OCI-LY7 (cell line): ENCODE measurements at regions of chr17 and their contacts with region 1.

Region 1: DNA sequence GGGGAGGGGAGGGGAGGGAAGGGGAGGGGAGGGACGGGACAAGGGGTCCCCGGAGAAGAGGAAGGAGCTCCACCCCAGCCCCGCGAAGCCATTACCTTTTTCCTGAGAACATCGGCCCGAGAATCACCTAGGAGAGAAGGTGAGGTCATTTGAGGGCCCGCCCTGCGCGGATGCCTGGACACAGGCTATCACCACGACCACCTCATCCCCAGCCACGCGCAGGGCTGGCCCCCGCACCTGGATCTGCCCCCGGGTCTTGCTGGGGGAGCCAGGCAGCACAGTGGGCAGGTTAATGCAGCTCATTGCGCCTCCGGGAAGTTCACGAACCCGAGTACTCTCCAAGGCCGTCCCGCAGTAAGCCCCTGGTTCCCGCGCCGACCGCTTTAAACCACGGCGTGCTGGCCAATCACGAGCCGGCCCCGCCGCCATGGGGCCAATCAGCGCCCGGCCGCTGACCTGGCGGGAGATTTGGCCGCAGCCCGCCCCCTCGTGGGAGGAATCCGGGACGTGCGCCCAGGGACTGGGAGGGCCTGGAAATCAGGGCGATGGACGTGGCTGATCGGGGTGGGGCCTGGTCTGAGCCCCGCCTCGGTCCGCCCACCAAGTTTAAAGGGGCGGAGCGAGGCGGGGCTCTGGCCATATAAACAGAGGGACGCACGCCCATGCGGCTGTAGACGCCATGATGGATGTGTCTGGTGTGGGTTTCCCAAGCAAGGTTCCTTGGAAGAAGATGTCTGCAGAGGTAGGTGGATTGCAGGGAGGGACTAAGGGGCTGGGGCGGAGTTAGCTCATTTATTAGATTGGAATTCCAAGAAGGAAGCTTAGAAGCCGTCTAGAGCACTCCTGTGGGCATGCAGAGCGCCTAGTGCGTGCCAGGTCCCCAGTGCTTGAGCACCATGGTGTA is at the starts of genes AFMID and TK1:
- DNase-seq: peak; percentile 98
- H3K4me3 ChIP-seq: peak within 1 kb of the TSS; percentile 76
- H3K27ac ChIP-seq: peak within 1 kb of the TSS; percentile 41
- H3K4me1 ChIP-seq: peaks cover 60% of the 10 kb centered on the region
- CTCF ChIP-seq: peak; percentile 67
- total RNA-seq, gene AFMID: 87.8 and 89.1 TPM in 2 replicates
- total RNA-seq, gene TK1: 108 and 118 TPM in 2 replicates

Region 2: DNA sequence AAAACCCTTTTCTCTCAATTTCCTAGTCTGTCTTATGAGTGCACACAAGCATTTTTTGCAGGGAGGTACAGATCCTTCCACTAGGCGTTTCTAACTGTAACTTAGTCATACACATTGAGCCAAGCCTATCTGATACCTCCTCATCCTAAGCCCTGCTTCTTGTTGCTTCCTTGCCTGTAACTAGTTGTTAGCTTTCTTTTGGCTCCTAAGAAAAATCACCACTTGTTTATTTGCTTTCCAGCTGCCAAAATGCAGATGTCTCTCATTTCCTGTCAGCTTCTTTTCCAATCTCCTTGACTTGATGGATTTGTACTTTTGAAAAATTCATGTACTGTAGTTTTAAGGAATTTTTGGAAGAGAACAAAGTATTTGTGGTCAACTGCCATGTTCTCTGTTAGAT is 154.8 kb before region 1 on chr17:
- CTCF ChIA-PET with region 1: no interaction called
- POLR2A ChIA-PET with region 1: no interaction called
- intact Hi-C with region 1: no loop called
- DNase-seq: no peak
- H3K4me3 ChIP-seq: no peak overlapping the region
- H3K27ac ChIP-seq: no peak overlapping the region
- H3K4me1 ChIP-seq: peaks cover 9% of the 10 kb centered on the region
- CTCF ChIP-seq: no peak

Region 3: GRCh38 chr17:78128551-78129350 is 58.2 kb before region 1 on chr17 and contains the start of gene TMC6:
- CTCF ChIA-PET with region 1: interaction called, 5 read pairs
- POLR2A ChIA-PET with region 1: interaction called, 6 read pairs
- intact Hi-C with region 1: loop called (anchors 2 kb)
- DNase-seq: peak; percentile 86
- H3K4me3 ChIP-seq: peak within 1 kb of the TSS; percentile 81
- H3K27ac ChIP-seq: peak within 1 kb of the TSS; percentile 91
- H3K4me1 ChIP-seq: peaks cover 85% of the 10 kb centered on the region
- CTCF ChIP-seq: no peak
- total RNA-seq, gene TMC6: 94.0 and 124 TPM in 2 replicates

Region 4: DNA sequence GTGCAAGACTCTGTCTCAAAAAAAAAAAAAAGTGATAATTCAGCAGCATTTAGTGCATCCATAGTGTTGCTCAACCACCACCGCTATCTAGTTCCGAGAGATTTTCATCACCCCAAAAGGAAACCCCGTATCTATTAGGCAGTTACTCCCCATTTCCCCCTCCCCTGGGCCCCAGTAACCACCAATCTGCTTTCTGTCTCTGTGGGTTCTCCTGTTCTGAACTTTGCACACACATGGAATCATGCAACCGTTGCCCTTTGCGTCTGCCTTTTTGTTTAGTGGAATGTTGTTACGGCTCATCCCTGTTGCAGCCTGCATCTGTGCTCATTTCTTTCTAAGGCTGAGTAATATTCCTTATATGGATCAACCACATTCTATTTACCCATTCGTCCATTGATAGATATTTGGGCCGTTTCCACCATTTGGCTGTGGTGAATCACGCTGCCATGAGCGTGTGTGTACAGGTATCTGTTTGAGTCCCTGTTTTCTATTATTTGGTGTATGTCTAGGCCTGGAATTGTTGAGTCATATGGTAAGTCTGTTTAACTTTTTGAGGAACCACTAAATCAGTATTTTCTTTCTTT is 27.3 kb before region 1 on chr17:
- CTCF ChIA-PET with region 1: no interaction called
- POLR2A ChIA-PET with region 1: no interaction called
- intact Hi-C with region 1: no loop called
- DNase-seq: no peak
- H3K4me3 ChIP-seq: no peak overlapping the region
- H3K27ac ChIP-seq: no peak overlapping the region
- H3K4me1 ChIP-seq: peaks cover 20% of the 10 kb centered on the region
- CTCF ChIP-seq: no peak

Region 5: DNA sequence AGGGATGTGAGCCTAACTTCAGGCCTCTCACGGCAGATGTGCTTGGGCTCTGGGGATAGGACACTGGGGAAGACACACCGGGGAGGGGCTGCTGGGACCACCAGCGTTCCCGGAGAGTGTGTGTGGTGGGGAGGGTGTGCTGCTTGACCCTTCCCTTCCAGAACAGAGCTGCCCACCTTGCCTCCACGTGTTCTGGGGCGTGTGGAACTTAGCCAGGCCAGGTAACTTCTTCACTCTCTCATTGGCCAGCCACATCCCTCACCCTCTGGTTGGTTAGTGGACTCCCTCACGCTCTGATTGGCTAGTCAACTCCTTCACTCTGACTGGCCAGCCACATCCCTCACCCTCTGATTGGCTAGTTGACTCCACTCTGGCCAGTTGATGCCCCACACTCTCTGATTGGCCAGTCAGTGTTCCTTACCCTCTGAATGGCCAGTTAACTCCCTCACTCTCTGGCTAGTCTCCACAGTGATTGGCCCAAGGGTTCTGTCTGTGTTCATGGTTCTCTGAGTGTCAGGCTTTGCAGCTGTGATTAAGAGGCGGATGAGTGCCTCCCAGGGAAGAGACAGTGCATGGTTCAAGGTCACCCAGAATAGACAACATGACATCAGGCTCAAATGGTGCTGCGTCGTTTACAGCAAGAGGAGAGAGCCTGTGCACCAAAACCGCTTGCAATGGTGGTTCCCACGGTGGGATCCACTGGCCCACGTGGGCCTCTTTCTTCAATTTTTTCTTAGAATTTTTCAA is 54.5 kb after region 1 on chr17:
- CTCF ChIA-PET with region 1: no interaction called
- POLR2A ChIA-PET with region 1: interaction called, 6 read pairs
- intact Hi-C with region 1: loop called (anchors 1 kb)
- DNase-seq: peak; percentile 85
- H3K4me3 ChIP-seq: peak overlapping the region; percentile 0
- H3K27ac ChIP-seq: peak overlapping the region; percentile 76
- H3K4me1 ChIP-seq: peaks cover 66% of the 10 kb centered on the region
- CTCF ChIP-seq: no peak